HepG2 (cell line): ENCODE measurements at regions of chr10 and their contacts with region 1.

Region 1: DNA sequence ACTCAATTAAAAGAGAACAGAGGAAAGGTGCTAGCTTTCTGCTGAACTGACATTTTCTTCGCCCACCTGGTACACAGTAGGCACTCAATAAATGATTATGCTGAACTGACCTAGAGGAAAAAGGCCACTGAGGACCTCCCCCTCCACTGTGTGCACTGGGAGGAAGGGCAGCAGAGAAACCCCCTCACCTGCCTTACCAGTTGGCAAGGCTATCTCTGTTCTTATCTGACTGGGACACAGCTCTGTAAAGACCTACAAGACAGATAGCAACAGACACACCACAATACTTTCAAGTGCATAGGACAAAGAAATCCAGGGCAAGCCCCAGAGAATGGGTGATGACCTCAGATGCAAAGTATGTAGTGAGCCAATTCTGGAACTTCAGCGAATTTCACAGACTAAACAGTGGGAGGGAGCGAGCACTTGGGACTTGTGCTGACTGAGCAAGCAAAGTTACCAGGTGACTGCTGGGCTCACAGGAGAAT is 30.4 kb downstream of the PDLIM1 start:
- DNase-seq: peak; percentile 84
- ATAC-seq: peak; percentile 67
- H3K4me3 ChIP-seq: no peak overlapping the region
- H3K27ac ChIP-seq: peak overlapping the region; percentile 55
- H3K4me1 ChIP-seq: peaks cover 48% of the 10 kb centered on the region
- H3K27me3 ChIP-seq: no peaks in the 10 kb centered on the region
- CTCF ChIP-seq: no peak
- EP300 ChIP-seq: no peak
- POLR2A ChIP-seq: no peak
- RAD21 ChIP-seq: no peak

Region 2: GRCh38 chr10:95236068-95236903 is 24.2 kb before region 1 on chr10:
- CTCF ChIA-PET with region 1: no interaction called
- POLR2A ChIA-PET with region 1: no interaction called
- in situ Hi-C with region 1: no loop called
- intact Hi-C with region 1: no loop called
- DNase-seq: no peak
- ATAC-seq: no peak; the same call in 2 of the 3 replicates
- H3K4me3 ChIP-seq: no peak overlapping the region
- H3K27ac ChIP-seq: no peak overlapping the region
- H3K4me1 ChIP-seq: no peaks in the 10 kb centered on the region
- H3K27me3 ChIP-seq: no peaks in the 10 kb centered on the region
- CTCF ChIP-seq: no peak
- EP300 ChIP-seq: no peak
- POLR2A ChIP-seq: no peak
- RAD21 ChIP-seq: no peak

Region 3: GRCh38 chr10:95273393-95274312 is 13.2 kb after region 1 on chr10:
- CTCF ChIA-PET with region 1: no interaction called
- POLR2A ChIA-PET with region 1: interaction called, 7 read pairs
- in situ Hi-C with region 1: no loop called
- intact Hi-C with region 1: loop called (anchors 1 kb)
- DNase-seq: peak; percentile 98
- ATAC-seq: peak; percentile 92
- H3K4me3 ChIP-seq: peak overlapping the region; percentile 19 to 60 (median 25); a peak in 4 of 6 replicates
- H3K27ac ChIP-seq: peak overlapping the region; percentile 74
- H3K4me1 ChIP-seq: peaks cover 70% of the 10 kb centered on the region
- H3K27me3 ChIP-seq: no peaks in the 10 kb centered on the region
- CTCF ChIP-seq: 0 out of 2 replicates have a peak, but pooled peaks have one; percentile 15
- EP300 ChIP-seq: peak; percentile 10 to 78; a peak in 2 of 4 replicates
- POLR2A ChIP-seq: peak in 1 of 2 experiments; percentile 17; a peak in 1 of 4 replicates
- RAD21 ChIP-seq: no peak

Region 4: GRCh38 chr10:95346715-95347401 is 86.4 kb after region 1 on chr10:
- CTCF ChIA-PET with region 1: no interaction called
- POLR2A ChIA-PET with region 1: interaction called, 4 read pairs
- in situ Hi-C with region 1: no loop called
- intact Hi-C with region 1: loop called (anchors 5 kb)
- DNase-seq: peak; percentile 99
- ATAC-seq: peak; percentile 94
- H3K4me3 ChIP-seq: no peak overlapping the region
- H3K27ac ChIP-seq: peak overlapping the region; percentile 78
- H3K4me1 ChIP-seq: peaks cover 93% of the 10 kb centered on the region
- H3K27me3 ChIP-seq: no peaks in the 10 kb centered on the region
- CTCF ChIP-seq: no peak; the same call in 1 of the 2 replicates
- EP300 ChIP-seq: peak; percentile 85 to 96; a peak in 3 of 4 replicates
- POLR2A ChIP-seq: peak in 1 of 2 experiments; percentile 13; a peak in 1 of 4 replicates
- RAD21 ChIP-seq: 0 out of 2 replicates have a peak, but pooled peaks have one; percentile 31